ENCODE measurements at regions of chr9 and their contacts with region 1.

Region 1: GRCh38 chr9:94799578-94800264 is 73.2 kb downstream of the AOPEP start:
- DNase-seq: no peak
- ATAC-seq: peak; percentile 57

Region 2: DNA sequence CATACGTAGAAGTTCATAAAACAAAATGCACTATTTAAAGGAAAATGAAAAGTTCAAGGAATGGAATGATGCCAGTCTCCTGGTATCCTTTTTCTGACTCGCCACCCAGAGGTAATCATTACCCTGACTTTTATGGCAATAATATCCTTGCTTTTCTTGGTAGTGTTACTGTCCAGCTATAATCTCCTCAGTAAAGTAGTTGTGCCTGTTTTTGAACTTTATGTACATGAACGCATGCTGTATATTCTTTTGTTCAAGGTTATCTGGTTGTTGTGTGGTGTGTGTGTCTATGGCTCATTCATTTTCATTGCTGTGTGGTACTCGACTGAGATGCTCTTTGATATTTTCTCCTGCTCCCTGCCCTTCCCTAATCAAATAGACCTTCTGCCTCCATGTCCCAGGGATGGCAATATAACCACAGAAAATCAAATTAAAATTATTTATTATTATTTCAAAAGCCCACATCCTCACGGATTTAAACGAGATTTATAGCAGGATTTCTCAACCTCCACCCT is 131.2 kb before region 1 on chr9:
- intact Hi-C with region 1: no loop called
- DNase-seq: no peak
- ATAC-seq: peak; percentile 38

Region 3: DNA sequence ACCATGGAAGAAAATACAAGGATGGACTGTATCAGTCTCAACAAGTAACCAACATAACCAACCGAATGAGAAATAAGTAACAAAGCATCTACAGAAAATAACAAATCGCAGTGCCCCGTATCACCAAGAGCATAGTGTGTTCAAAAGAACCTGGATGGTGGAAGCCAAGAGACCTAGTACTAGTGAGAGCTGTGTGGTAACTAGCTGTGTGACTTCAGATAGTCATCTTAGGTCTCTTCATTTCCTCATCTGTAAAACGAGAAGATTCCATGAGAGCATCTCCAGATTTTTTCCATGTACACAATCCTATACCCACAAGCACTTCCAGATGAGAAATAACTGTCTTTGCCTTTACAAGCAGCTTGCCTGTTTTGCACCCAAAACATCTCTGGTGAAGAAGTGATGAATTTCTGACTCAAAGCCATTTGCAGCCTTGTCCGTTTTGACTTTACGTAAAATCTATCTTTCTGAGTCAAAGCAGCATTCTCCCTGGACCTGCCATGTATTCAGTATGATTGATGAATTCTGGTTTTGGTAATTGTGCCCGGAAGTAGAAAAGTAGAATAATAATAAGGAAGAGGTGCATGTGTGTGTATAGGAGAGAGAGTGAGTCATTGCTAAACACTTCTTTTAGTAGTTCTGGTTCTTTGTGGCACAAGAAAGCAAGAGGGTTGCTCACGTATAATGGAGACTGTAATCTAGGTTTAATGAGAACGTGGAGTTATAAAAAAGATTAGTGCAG is 32.2 kb before region 1 on chr9:
- intact Hi-C with region 1: no loop called
- DNase-seq: no peak
- ATAC-seq: no peak

Region 4: DNA sequence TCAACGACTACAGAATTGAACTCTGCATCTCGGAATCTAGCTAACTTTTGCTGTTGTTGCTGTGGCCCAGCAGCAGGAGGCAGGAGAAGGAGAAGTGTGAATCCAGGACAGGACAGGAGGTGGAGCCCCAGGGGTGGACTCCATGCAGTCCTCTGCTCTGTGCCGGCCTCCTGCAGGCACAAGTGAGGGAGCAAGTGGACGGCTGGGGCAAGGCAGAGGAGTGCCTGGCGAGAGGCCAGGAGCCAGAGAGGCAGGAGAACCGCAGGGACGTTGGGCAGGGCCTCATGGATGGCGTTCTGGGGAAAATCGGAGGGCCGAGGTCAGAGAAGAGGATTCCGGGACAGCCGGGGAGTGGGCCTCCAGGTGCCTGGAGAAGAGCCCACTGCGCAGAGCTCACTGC is 303.7 kb after region 1 on chr9:
- intact Hi-C with region 1: loop called (anchors 10 kb)
- DNase-seq: no peak
- ATAC-seq: peak; percentile 41

Measured in sciatic nerve (tissue), 2 donors.